Breast epithelium (tissue), 4 donors: ENCODE measurements at regions of chr18 and their contacts with region 1.

Region 1: GRCh38 chr18:25125680-25126079 is 226.3 kb downstream of the ZNF521 start:
- DNase-seq: no peak
- H3K4me3 ChIP-seq: no peak overlapping the region
- H3K27ac ChIP-seq: no peak overlapping the region
- H3K4me1 ChIP-seq: peaks cover 0 to 10% of the 10 kb centered on the region in 2 donors
- H3K27me3 ChIP-seq: no peaks in the 10 kb centered on the region
- CTCF ChIP-seq: no peak
- POLR2A ChIP-seq: no peak

Region 2: DNA sequence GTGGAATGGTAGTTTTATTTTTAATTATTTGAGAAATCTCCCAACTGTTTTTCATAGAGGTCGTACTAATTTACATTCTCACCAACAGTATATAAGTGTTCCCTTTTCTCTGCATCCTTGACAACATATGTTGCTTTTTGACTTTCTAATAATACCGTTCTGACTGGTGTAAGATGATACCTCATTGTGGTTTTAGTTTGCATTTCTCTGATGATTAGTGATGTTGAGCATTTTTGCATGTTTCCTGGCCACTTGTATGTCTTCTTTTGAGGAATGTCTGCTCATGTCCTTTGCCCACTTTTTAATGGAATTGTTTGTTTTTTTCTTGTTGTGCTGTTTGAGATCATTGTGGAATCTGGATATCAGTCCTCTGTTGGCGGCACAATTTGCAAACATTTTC is 16.2 kb before region 1 on chr18:
- intact Hi-C with region 1: loop called (anchors 1 kb)
- DNase-seq: no peak
- H3K4me3 ChIP-seq: no peak overlapping the region
- H3K27ac ChIP-seq: no peak overlapping the region
- H3K4me1 ChIP-seq: no peaks in the 10 kb centered on the region
- H3K27me3 ChIP-seq: no peaks in the 10 kb centered on the region
- CTCF ChIP-seq: no peak
- POLR2A ChIP-seq: no peak

Region 3: GRCh38 chr18:25136416-25137196 is 10.9 kb after region 1 on chr18:
- intact Hi-C with region 1: no loop called
- DNase-seq: no peak
- H3K4me3 ChIP-seq: no peak overlapping the region
- H3K27ac ChIP-seq: peak overlapping the region; percentile 40 to 62
- H3K4me1 ChIP-seq: no peaks in the 10 kb centered on the region
- H3K27me3 ChIP-seq: no peaks in the 10 kb centered on the region
- CTCF ChIP-seq: no peak
- POLR2A ChIP-seq: no peak

Region 4: DNA sequence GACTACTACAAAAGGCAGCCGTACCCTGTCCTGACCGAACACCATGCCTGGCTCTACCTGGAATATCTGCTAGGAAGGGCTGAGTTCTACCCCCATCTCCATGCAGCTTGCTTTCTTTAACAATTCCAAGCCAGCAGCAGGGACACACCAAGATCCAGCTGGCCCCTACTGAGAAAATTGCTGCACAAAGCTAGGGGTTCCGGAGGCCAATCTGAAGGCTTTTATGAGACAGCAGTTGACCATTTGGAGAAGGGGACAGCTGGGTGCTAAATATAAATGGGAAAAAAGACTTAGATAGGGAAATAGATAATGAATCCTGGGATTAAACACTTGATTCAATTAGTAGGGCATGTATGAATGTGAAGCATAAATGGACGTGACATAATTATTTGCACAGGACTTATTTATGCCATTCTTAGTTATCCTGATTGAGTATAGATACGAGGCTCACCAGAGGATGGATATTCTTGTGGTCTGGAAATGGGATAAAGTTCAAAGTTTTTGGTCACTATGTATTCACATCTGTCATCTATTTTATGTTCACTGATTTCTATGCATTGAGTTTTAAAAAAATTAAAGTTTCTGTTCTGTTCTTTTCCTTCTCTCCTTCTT is 22.3 kb after region 1 on chr18:
- intact Hi-C with region 1: no loop called
- DNase-seq: no peak
- H3K4me3 ChIP-seq: no peak overlapping the region
- H3K27ac ChIP-seq: no peak overlapping the region
- H3K4me1 ChIP-seq: peaks cover 0 to 5% of the 10 kb centered on the region in 2 donors
- H3K27me3 ChIP-seq: no peaks in the 10 kb centered on the region
- CTCF ChIP-seq: no peak
- POLR2A ChIP-seq: no peak